ENCODE measurements at regions of chr9 and their contacts with region 1.

Region 1: GRCh38 chr9:128733256-128733655 is 9.3 kb upstream of the ZDHHC12 start:
- DNase-seq: peak; percentile 68
- H3K4me3 ChIP-seq: no peak overlapping the region
- H3K27ac ChIP-seq: no peak overlapping the region
- H3K4me1 ChIP-seq: no peaks in the 10 kb centered on the region
- H3K27me3 ChIP-seq: no peaks in the 10 kb centered on the region
- CTCF ChIP-seq: peak; percentile 74 to 82

Region 2: DNA sequence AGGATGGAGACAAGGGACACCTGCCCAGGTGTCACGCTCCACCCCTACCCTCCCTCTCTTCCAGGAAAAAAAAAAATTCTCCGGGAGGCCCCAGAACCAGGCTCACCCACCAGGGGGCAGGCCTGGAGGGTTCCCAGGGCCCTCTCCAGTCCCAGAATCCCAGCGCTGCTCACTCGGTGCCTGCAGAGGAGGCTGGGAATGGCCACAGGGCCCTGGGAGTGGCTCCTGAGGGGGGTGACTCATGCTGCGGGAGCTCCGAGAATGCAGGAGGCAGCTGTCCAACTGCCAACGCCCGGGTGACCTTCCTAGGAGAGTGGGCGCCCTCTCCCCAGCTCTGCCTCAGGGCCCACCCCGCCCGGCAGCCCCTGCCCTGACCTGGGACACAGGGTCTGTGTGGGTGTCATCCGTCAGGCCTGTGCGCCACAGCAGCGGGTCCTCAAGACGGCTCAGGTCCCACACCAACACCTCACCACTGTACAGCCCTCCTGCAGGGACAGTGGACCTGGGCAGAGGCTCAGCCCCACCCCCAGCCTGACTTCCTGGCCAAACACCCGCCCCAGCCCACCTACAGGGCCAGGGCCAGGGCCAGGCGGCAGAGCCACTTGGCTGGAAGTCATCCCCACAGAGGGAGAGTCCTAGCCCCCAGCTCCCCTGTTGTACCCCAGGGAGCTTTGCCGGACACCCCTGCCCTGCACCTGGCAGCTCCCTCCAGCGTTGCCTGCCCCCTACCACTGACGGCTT is 97.8 kb before region 1 on chr9:
- CTCF ChIA-PET with region 1: no interaction called
- dilution Hi-C with region 1: no loop called
- in situ Hi-C with region 1: no loop called
- intact Hi-C with region 1: no loop called
- DNase-seq: peak; percentile 95
- H3K4me3 ChIP-seq: peak overlapping the region in 2 of 3 experiments; percentile 21 to 27
- H3K27ac ChIP-seq: peak overlapping the region; percentile 71
- H3K4me1 ChIP-seq: peaks cover 28% of the 10 kb centered on the region
- H3K27me3 ChIP-seq: no peaks in the 10 kb centered on the region
- CTCF ChIP-seq: peak; percentile 77 to 85

Region 3: DNA sequence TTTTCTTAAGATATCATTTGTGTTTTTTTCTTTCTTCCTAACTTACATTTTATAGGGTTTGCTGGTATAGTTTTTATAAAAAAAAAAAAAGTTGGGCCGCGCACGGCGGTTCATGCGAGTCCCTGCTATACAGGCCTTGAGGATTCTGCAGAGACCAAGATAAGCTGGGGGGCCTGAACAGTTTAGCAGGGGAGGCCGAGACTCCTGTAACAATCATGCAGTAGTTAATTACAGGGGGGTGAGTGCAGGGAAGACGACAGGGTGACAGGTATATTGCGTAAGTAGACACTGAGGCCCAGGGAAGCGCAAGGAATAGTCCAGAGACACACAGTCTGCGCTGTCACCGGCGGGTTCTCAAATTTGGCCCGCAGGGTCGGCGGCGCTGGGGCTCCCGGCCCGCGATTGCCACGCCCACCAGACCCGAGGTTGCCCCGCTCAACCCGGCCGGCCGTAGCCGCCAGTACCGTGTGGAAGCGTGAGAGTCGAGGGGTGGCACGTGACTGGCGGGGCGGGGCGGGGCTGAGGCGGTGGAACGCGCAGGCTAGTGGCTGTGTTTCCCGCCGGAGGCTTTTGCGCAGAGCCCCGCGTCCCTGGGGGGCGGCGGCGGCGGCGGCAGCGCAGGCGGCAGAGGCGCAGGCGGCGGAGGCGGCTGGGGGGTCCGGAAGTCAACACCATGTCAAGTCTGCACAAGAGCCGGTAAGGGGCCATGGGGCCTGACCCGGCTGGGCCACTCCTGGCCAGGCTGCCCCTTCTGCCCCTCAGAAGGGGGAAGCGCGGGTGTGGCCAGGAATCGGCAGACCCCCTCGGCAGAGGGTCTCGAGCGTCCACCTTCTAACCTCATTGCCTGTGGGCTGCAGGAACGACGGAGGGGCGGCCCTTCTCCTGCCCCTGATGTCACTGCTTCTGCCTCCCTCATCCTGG is 53.7 kb after region 1 on chr9 and contains the start of gene TBC1D13:
- CTCF ChIA-PET with region 1: no interaction called
- dilution Hi-C with region 1: no loop called
- in situ Hi-C with region 1: no loop called
- intact Hi-C with region 1: loop called (anchors 5 kb)
- DNase-seq: peak; percentile 77
- H3K4me3 ChIP-seq: peak within 1 kb of the TSS; percentile 78 to 100 (median 96)
- H3K27ac ChIP-seq: peak within 1 kb of the TSS; percentile 11
- H3K4me1 ChIP-seq: peaks cover 6% of the 10 kb centered on the region
- H3K27me3 ChIP-seq: no peaks in the 10 kb centered on the region
- CTCF ChIP-seq: no peak
- total RNA-seq, gene TBC1D13: 18.0 to 18.5 TPM

Region 4: DNA sequence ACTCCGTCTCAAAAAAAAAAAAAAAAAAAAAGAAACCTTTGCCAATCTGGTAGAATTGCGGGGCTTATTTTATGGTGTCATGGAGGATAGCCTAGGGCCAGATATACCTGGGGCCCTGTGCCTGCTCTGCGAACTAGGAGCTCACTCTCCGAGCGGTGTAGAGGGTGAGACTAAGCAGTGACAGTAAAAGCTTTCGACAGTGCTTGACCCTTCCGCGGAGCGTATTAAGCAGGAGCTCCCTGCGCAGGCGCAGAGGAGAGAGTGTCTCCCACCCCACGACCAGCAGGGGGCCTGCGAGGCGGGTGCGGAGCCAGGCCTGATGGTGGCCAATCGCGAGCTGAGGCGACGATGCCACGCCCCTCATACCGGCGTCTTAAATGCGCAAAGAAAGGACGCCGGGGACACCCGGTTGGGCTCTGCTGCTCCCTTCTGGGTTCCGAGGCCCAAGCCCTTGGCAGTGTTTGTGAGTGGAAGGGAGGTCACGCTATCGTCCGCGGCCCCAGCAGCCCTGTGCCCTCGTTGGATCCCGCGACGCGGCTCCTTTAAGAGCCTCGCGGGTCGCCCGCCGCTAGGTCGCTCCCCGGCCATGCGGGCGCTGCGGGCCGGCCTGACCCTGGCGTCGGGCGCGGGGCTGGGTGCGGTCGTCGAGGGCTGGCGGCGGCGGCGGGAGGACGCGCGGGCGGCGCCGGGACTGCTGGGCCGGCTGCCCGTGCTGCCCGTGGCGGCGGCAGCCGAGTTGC is 85.0 kb after region 1 on chr9 and contains the start of gene ENDOG:
- CTCF ChIA-PET with region 1: interaction called, 5 read pairs
- dilution Hi-C with region 1: no loop called
- in situ Hi-C with region 1: no loop called
- intact Hi-C with region 1: loop called (anchors 1 kb)
- DNase-seq: peak; percentile 93
- H3K4me3 ChIP-seq: peak within 1 kb of the TSS; percentile 75 to 80 (median 76)
- H3K27ac ChIP-seq: peak within 1 kb of the TSS; percentile 41
- H3K4me1 ChIP-seq: peaks cover 16% of the 10 kb centered on the region
- H3K27me3 ChIP-seq: no peaks in the 10 kb centered on the region
- CTCF ChIP-seq: peak; percentile 96 to 99
- total RNA-seq, gene ENDOG: 30.8 to 40.3 TPM

Measured in mammary epithelial cell (primary cell).